Posterior vena cava (tissue), 2 donors: ENCODE measurements at regions of chr3 and their contacts with region 1.

Region 1: DNA sequence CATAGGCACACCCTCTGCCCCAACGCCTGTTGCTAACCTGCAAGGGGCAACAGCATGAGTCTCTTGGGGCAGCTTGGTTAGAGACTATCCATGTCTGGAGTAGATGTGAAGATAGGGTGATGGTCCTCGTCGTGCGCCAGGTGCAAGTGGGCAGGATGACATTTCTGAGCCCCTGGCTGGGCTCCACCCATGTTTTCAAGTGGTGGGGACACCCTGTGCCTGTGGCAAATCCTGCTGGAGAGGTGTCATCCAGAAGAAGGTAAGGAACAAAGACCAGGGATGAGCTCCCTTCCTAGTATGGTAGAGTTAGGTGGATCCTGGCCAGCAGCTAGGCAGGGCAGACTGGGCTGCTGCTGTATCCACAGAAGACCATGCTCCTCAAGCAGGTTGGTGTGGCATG is 152.6 kb downstream of the ABHD5 start:
- DNase-seq: no peak

Region 2: DNA sequence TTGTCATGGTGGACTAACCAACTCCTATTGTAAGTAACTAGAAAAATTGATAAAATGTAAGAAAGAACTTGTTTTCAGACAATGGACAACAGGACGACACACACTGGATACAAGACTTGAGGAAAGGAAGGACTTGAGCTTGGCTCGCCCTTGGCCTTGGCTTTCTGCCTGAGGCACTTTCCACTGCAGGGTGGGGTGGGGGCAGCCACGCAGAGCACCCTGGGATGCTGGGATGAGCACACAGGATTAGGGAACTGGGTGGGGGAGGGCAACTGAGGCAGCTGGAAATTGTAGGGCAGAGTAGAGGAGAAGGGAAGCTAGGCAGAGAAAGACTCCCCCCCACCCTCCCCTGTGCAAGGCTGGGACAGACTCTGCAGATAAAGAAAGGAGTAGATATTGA is 1115.3 kb before region 1 on chr3:
- intact Hi-C with region 1: no loop called
- DNase-seq: no peak

Region 3: DNA sequence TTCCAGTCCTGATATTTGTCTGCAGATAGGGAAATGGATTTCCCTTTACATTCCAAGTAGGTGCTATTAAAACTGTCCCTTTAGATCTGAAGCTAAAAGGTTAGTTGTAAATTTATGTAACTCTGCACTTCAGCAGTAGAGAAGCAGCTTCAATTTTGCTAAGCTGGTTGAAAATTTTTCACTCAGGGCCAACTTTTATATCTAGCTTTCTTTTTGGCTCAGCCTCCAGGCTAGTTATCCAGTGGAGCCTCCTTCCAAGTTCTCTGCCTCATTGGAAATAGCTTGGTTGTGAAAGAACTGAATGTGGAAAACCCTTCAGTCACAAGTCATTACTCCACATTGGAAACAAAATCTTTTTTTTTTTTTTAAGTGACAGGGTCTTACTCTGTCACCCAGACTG is 733.2 kb after region 1 on chr3:
- intact Hi-C with region 1: loop called in 1 of 2 experiments (anchors 10 kb)
- DNase-seq: no peak